HCT116 (cell line): ENCODE measurements at regions of chr3 and their contacts with region 1.

Region 1: GRCh38 chr3:53114011-53114400 is 16.2 kb downstream of the RFT1 start:
- DNase-seq: peak; percentile 54
- ATAC-seq: peak; percentile 86
- H3K4me3 ChIP-seq: no peak overlapping the region
- H3K27ac ChIP-seq: no peak overlapping the region
- H3K4me1 ChIP-seq: no peaks in the 10 kb centered on the region; a peak in 1 of 4 replicates
- H3K27me3 ChIP-seq: no peaks in the 10 kb centered on the region
- CTCF ChIP-seq: peak; percentile 81 to 97 (median 94)
- POLR2A ChIP-seq: no peak
- RAD21 ChIP-seq: peak; percentile 92

Region 2: DNA sequence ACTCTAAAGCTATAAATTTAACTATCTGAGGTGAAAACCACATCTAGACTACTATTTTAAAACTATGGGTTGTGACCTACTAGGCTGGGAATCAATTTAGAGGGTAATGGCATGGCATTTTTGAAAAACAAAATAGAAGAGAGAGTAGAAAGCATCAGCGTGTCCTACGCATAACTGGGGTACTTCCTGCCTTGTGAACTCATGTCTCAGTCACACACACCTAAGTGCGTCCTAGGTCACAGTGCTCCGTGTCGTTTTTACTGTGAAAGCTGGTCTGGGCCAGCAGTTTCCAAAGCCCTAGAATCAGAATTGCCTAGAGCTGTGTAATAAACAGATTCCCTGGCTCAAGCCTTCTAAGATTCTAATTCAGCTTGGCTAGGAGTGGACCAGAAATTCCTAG is 16.1 kb before region 1 on chr3:
- CTCF ChIA-PET with region 1: no interaction called
- POLR2A ChIA-PET with region 1: no interaction called
- RAD21 ChIA-PET with region 1: no interaction called
- intact Hi-C with region 1: no loop called
- DNase-seq: no peak
- ATAC-seq: no peak
- H3K4me3 ChIP-seq: no peak overlapping the region
- H3K27ac ChIP-seq: no peak overlapping the region
- H3K4me1 ChIP-seq: no peaks in the 10 kb centered on the region
- H3K27me3 ChIP-seq: no peaks in the 10 kb centered on the region
- CTCF ChIP-seq: no peak
- POLR2A ChIP-seq: no peak
- RAD21 ChIP-seq: no peak

Region 3: DNA sequence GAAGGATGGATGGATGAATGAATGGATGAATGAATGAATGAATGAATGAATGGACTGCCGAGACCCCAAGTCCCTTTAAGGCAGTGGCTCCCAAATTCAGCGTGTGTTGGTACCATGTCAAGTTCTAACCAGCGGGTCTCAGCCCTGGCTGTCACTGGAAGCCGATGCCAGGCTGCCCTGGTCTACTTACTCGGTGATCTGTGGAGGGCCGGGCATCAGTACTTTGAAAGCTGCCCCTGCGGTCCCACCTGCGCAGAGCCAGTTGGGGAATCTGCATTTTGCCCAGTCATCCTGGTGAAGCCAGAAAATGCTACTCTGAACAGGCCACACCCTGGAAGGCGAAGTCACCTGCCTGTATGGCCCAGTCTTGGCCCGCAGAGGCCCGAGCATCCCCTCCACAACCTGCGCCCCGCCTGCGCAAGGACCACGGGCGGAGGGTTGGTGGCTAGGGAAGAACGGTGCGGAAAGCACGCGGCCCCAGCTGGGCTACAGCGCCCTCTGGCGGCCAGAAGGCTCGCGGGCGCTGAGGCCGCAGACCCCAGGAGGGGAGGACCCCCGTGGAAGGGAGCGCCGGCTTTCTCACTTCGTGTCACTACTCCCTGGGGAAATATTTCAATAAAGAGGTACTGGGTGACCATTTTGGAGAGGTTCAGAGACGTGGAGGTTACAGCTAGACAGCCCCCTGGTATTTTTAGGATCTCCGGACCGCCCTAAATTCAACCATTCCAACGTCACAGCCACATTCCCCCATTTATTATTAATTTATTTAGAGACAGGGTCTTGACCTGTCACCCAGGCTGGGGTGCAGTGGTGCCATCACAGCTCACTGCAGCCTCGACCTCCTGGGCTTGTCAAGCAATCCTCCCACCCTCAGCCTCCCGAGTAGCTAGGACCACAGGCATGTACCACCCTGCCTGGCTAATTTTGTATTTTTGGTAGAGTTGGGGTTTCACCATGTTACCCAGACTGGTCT is 81.9 kb after region 1 on chr3:
- CTCF ChIA-PET with region 1: interaction called, 28 read pairs
- POLR2A ChIA-PET with region 1: interaction called, 4 read pairs
- RAD21 ChIA-PET with region 1: interaction called, 5 to 6 read pairs
- intact Hi-C with region 1: loop called (anchors 1 kb)
- DNase-seq: peak; percentile 12
- ATAC-seq: peak; percentile 58
- H3K4me3 ChIP-seq: 0 out of 4 replicates have a peak overlapping the region, but pooled peaks of 1 of the 2 experiments have one; percentile 27
- H3K27ac ChIP-seq: peak overlapping the region; percentile 85
- H3K4me1 ChIP-seq: peaks cover 18 to 52% of the 10 kb centered on the region in 2 experiments
- H3K27me3 ChIP-seq: no peaks in the 10 kb centered on the region
- CTCF ChIP-seq: peak; percentile 92 to 99 (median 98)
- POLR2A ChIP-seq: no peak
- RAD21 ChIP-seq: peak; percentile 94

Region 4: DNA sequence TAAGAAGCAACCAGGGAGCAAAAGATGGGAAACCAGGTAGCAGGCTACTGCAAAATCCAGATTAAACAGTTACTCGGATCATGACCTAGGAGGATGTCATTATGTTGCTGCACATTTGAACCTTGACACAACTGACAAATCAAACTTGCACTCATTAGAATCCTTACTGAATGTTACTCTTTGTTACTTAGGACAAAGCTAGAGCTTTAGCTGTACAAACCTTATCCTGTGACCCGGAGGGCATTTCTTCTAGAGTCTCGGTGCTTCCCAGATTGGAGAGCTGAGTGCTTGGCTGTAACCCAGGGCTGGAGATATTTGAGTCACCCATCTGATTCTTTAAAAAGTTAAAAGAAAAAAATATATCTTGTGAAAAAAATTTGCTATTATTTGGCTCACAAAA is 190.0 kb after region 1 on chr3:
- CTCF ChIA-PET with region 1: no interaction called
- POLR2A ChIA-PET with region 1: no interaction called
- RAD21 ChIA-PET with region 1: no interaction called
- intact Hi-C with region 1: loop called (anchors 2 kb)
- DNase-seq: no peak
- ATAC-seq: no peak
- H3K4me3 ChIP-seq: no peak overlapping the region
- H3K27ac ChIP-seq: no peak overlapping the region
- H3K4me1 ChIP-seq: no peaks in the 10 kb centered on the region
- H3K27me3 ChIP-seq: no peaks in the 10 kb centered on the region
- CTCF ChIP-seq: no peak
- POLR2A ChIP-seq: no peak
- RAD21 ChIP-seq: no peak